Activated T-helper 1 cell treated with anti-CD3 and anti-CD28 coated beads, Interleukin-12 subunit alpha, Interleukin-12 subunit beta, Interleukin-2, Interleukin-4 antibody, amounts not matched to agents 30 ng/mL and 10 ng/mL and 1 ng/mL, durations not matched to agents 14 hours and 24 hours and 36 hours (primary cell): ENCODE measurements at regions of chr14 and their contacts with region 1.

Region 1: GRCh38 chr14:21269252-21270046 is at the start of gene HNRNPC:
- DNase-seq: peak; percentile 100
- H3K4me3 Mint-ChIP-seq: peak within 1 kb of the TSS; percentile 99
- H3K27ac Mint-ChIP-seq: peak within 1 kb of the TSS; percentile 100
- H3K4me1 Mint-ChIP-seq: peaks cover 34% of the 10 kb centered on the region
- H3K27me3 Mint-ChIP-seq: no peaks in the 10 kb centered on the region
- total RNA-seq, gene HNRNPC: 958 and 976 TPM in 2 replicates

Region 2: DNA sequence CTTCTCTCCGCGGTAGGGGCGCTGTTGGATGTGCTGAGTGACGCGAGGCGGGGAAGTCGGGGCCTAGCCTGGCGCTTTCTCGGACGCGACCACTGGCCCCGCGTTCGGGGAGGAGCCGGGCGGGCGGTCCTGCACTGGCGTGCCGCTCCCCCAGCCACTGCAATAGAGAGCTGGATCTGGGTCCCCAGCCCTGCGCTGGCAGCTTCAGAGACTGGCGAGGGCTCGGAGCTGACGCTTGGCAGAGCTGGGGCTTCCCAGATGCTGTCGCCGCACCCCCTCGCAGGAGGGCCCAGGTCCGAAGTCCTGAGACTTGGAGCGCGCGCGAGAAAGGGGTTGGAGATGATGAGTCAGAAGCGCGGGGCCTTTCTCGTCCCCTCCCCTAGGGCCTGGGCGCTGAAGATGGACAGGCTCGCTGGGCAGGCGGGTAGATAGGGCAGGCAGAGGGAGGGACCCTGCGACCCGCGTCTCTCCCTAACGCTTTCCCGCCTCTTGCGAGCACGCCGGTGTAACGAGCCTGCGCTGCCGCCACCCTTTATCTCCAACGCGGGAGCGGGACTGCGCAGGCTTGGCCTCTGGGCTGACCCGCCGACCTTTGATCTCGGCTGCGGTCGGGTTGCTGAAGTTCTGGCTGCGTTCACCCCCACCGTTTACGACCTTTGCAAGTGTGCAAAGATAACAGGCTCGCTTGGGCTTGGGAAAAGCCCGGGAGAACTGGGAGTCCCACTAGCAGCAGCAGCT is 165.6 kb before region 1 on chr14:
- intact Hi-C with region 1: loop called (anchors 5 kb)
- DNase-seq: peak; percentile 92
- H3K4me3 Mint-ChIP-seq: peak overlapping the region; percentile 93
- H3K27ac Mint-ChIP-seq: peak overlapping the region; percentile 97
- H3K4me1 Mint-ChIP-seq: peaks cover 56% of the 10 kb centered on the region
- H3K27me3 Mint-ChIP-seq: peaks cover 6% of the 10 kb centered on the region

Region 3: DNA sequence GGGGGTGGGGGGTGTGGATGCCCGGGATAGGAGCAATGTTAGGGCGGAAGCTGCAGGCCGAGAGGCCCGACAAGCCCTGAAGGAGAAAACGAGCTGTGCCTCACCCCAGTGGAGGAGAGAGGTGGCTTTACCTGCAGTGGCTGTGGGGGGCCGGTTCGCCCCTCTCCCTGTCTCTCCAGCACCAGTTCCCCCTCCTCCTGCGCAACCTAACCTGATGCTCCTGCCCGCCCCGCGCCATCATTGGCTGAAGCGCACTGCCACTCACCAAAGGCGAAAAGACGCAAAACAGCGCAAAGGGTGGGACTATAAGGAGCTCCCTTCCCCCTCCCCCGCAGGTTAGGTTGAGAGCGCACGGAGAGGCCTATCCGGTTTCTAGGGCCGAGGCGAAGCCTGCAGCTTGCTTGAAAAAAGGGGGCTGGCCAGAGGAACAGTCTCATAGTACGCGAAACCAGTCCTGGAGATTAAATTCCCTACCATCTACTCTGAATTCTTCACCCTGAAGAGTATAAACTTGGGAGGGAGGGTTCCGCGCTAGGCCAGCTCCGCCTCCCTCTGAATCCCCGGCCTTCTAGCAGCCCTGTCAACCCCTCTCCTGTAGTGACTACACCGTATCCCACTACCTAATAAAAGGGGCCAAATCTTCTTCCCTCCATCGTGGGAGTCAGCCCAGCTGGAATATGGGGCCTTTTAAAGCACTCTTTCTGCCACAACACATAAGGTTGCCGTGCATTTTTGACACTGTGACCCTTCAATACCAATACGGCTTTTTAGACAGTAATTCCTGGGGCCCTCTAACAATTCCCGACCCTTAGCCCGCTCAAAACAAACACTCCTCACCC is 167.8 kb after region 1 on chr14:
- intact Hi-C with region 1: loop called (anchors 1 kb)
- DNase-seq: peak; percentile 97
- H3K4me3 Mint-ChIP-seq: peak overlapping the region; percentile 93
- H3K27ac Mint-ChIP-seq: peak overlapping the region; percentile 73
- H3K4me1 Mint-ChIP-seq: peaks cover 67% of the 10 kb centered on the region
- H3K27me3 Mint-ChIP-seq: no peaks in the 10 kb centered on the region

Region 4: GRCh38 chr14:21476925-21477681 is 207.7 kb after region 1 on chr14 and contains the starts of genes RAB2B and TOX4:
- intact Hi-C with region 1: loop called (anchors 1 kb)
- DNase-seq: peak; percentile 96
- H3K4me3 Mint-ChIP-seq: peak within 1 kb of the TSS; percentile 100
- H3K27ac Mint-ChIP-seq: peak within 1 kb of the TSS; percentile 99
- H3K4me1 Mint-ChIP-seq: peaks cover 35% of the 10 kb centered on the region
- H3K27me3 Mint-ChIP-seq: peaks cover 2% of the 10 kb centered on the region
- total RNA-seq, gene RAB2B: 30.3 and 32.5 TPM in 2 replicates
- total RNA-seq, gene TOX4: 77.5 and 86.6 TPM in 2 replicates

Region 5: DNA sequence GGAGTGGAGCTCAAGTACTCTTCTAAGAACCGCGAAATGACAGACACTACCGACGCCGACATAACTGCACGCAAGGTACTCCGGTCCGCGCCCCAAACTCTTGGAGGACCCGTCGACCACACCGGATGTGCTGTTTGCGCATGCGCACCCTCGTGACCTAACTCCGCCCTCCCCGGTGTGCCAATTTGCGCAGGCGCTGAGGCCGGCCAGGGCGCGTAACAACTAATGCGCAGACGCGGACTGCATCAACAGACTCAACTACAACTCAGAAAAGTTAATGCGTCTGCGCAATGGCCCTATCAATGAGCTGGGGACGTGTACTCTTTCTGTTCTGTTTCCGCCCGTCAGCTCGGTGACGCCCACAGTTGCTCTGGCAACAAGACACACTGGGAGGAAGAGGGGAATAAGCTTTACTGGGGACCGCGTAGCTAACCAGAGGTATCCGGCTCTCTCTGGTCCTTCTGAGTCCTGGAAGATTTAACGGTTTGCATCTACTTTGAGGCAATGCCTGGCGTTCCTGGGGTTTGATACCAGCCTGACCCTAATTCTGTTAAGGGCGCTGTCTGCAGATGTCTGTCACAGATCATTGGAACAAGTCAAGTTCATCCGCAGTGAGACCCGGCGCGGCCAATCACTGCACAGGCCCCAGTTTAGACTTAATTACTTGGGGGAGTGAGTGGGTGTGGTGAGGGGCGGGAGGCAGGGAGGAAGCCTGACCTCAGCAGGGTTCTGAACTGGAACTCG is 1319.8 kb after region 1 on chr14 and contains the start of gene DAD1:
- intact Hi-C with region 1: loop called (anchors 2 kb)
- DNase-seq: peak; percentile 100
- H3K4me3 Mint-ChIP-seq: peak within 1 kb of the TSS; percentile 91
- H3K27ac Mint-ChIP-seq: peak within 1 kb of the TSS; percentile 96
- H3K4me1 Mint-ChIP-seq: peaks cover 55% of the 10 kb centered on the region
- H3K27me3 Mint-ChIP-seq: no peaks in the 10 kb centered on the region
- total RNA-seq, gene DAD1: 228 and 229 TPM in 2 replicates